A549 (cell line): ENCODE measurements at regions of chr1 and their contacts with region 1.

Region 1: GRCh38 chr1:1040004-1040991 is 20.4 kb downstream of the AGRN start:
- DNase-seq: peak in 1 of 2 experiments; percentile 74
- ATAC-seq: peak; percentile 58 to 79
- H3K4me3 ChIP-seq: no peak overlapping the region
- H3K27ac ChIP-seq: peak overlapping the region in 1 of 2 experiments; percentile 74; a peak in 4 of 6 replicates
- H3K4me1 ChIP-seq: peaks cover 9% of the 10 kb centered on the region
- CTCF ChIP-seq: no peak
- EP300 ChIP-seq: no peak
- POLR2A ChIP-seq: no peak
- RAD21 ChIP-seq: no peak

Region 2: DNA sequence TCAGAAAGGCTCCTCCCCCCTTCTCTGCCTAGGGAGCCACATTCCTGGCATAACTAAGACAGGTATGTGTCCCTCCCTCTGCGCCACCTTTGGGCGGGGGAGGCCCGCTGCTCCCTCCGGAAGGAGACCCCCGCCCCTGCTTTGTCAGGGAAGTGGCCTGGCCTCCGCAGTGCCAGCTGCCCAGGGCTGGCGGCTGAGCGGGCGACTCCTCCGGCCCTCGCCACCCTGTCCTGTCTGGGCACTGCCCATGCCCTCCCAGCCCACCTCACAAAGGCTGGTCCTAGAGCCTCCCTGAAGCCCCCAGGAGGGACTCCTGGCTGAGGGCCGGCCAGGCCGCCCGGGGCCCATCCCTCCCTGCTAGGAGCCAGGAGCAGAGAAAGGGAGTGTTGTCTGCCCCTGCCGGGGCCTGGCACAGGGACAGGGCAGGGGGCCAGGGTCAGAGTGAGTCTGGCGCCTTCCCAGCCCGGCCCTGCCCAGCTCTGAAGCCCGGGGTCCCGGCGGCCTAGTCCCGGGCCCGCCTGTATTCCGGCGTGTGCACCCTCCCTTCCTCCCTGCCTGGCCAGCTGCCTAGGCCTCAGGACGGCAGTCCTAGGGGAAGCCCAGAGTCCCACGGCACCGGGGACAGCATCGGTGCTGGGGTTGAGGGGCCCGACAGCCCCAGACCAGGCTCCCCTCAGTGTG is 15.4 kb before region 1 on chr1:
- CTCF ChIA-PET with region 1: interaction called, 22 read pairs
- POLR2A ChIA-PET with region 1: no interaction called
- DNase-seq: peak in 1 of 2 experiments; percentile 65
- ATAC-seq: peak; percentile 9 to 39; a peak in 3 of 6 replicates
- H3K4me3 ChIP-seq: peak overlapping the region; percentile 36; the same call in 2 of the 3 replicates
- H3K27ac ChIP-seq: peak overlapping the region; percentile 86 to 98
- H3K4me1 ChIP-seq: peaks cover 50% of the 10 kb centered on the region
- CTCF ChIP-seq: no peak
- EP300 ChIP-seq: no peak
- POLR2A ChIP-seq: no peak
- RAD21 ChIP-seq: no peak

Region 3: DNA sequence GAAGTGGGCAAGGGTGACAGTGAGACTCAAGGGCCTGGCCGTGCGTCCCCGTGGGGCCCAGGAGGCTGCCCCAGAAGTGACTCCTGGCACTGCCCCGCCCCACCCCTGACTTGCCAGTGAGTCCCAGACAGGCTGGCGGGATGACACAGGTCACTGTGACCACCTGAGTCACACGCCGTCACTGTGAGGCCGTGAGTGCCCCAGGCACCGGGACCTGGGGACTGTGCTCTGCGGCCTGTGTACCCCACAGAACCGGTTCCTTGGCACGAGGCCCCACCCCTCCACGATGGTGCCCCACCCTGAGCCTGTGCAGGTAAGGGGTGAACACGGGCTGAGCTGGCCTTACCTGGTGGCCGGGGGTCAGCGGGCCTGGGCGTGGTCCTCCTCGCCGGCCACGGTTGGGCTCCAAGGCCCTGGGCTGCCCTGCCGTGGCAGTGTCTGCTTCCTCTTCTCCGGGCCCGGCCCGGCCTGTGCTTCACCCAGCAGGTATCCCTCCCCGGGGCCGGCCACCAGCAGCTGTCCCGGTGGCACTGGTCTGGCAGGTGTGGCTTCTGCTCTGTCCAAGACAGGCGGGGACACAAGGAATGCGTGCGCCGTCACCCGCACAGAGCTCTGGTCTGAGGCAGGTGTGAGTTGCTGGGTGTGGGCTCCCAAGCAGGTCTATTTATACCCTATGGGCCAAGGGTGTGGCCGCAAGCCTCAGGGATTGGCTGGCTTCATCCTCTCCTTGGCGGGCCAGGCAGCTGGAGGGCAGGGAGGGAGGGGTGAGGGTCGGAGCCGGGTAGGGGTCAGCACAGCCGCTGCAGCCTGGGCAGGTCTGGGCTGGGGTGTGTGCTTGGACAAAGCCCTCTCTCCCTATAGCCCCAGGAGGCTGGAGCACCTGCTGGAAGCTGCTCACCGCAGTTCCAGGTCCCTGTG is 33.6 kb after region 1 on chr1 and contains the start of gene RNF223:
- CTCF ChIA-PET with region 1: no interaction called
- POLR2A ChIA-PET with region 1: no interaction called
- DNase-seq: no peak
- ATAC-seq: peak; percentile 15 to 21; a peak in 4 of 6 replicates
- H3K4me3 ChIP-seq: no peak within 1 kb of the TSS
- H3K27ac ChIP-seq: peak within 1 kb of the TSS in 1 of 2 experiments; percentile 63; a peak in 3 of 6 replicates
- H3K4me1 ChIP-seq: peaks cover 28% of the 10 kb centered on the region
- CTCF ChIP-seq: no peak
- EP300 ChIP-seq: no peak
- POLR2A ChIP-seq: no peak
- RAD21 ChIP-seq: no peak
- polyA plus RNA-seq, gene RNF223: not detected in 2 replicates